Activated CD8-positive, alpha-beta memory T cell treated with anti-CD3 and anti-CD28 coated beads, Interleukin-2, amount 10 ng/mL, durations not matched to agents 7 days and 5 days (primary cell): ENCODE measurements at regions of chr12 and their contacts with region 1.

Region 1: GRCh38 chr12:89461649-89462612 is 62.7 kb downstream of the GALNT4 start:
- DNase-seq: no peak
- ATAC-seq: peak; percentile 87
- H3K4me3 Mint-ChIP-seq: peak overlapping the region; percentile 62
- H3K27ac Mint-ChIP-seq: peak overlapping the region; percentile 84
- H3K4me1 Mint-ChIP-seq: peaks cover 63% of the 10 kb centered on the region
- H3K27me3 Mint-ChIP-seq: no peaks in the 10 kb centered on the region

Region 2: GRCh38 chr12:89040146-89040964 is 421.6 kb before region 1 on chr12:
- CTCF ChIA-PET with region 1: interaction called, 14 read pairs
- DNase-seq: peak; percentile 95
- ATAC-seq: peak; percentile 95
- H3K4me3 Mint-ChIP-seq: peak overlapping the region; percentile 7
- H3K27ac Mint-ChIP-seq: peak overlapping the region; percentile 92
- H3K4me1 Mint-ChIP-seq: peaks cover 68% of the 10 kb centered on the region
- H3K27me3 Mint-ChIP-seq: no peaks in the 10 kb centered on the region

Region 3: GRCh38 chr12:89051065-89051677 is 410.8 kb before region 1 on chr12:
- CTCF ChIA-PET with region 1: interaction called, 19 read pairs
- DNase-seq: no peak
- ATAC-seq: peak; percentile 77
- H3K4me3 Mint-ChIP-seq: no peak overlapping the region
- H3K27ac Mint-ChIP-seq: peak overlapping the region; percentile 48
- H3K4me1 Mint-ChIP-seq: peaks cover 32% of the 10 kb centered on the region
- H3K27me3 Mint-ChIP-seq: no peaks in the 10 kb centered on the region

Region 4: GRCh38 chr12:89335452-89336244 is 126.3 kb before region 1 on chr12:
- CTCF ChIA-PET with region 1: no interaction called
- DNase-seq: no peak
- ATAC-seq: no peak
- H3K4me3 Mint-ChIP-seq: no peak overlapping the region
- H3K27ac Mint-ChIP-seq: no peak overlapping the region
- H3K4me1 Mint-ChIP-seq: peaks cover 26% of the 10 kb centered on the region
- H3K27me3 Mint-ChIP-seq: no peaks in the 10 kb centered on the region

Region 5: GRCh38 chr12:89352492-89353187 is 109.3 kb before region 1 on chr12 and contains the start of gene DUSP6:
- CTCF ChIA-PET with region 1: interaction called, 53 read pairs
- DNase-seq: peak; percentile 98
- ATAC-seq: peak; percentile 82
- H3K4me3 Mint-ChIP-seq: peak within 1 kb of the TSS; percentile 93
- H3K27ac Mint-ChIP-seq: peak within 1 kb of the TSS; percentile 93
- H3K4me1 Mint-ChIP-seq: peaks cover 38% of the 10 kb centered on the region
- H3K27me3 Mint-ChIP-seq: no peaks in the 10 kb centered on the region
- total RNA-seq, gene DUSP6: 76.3 to 100 TPM

Region 6: DNA sequence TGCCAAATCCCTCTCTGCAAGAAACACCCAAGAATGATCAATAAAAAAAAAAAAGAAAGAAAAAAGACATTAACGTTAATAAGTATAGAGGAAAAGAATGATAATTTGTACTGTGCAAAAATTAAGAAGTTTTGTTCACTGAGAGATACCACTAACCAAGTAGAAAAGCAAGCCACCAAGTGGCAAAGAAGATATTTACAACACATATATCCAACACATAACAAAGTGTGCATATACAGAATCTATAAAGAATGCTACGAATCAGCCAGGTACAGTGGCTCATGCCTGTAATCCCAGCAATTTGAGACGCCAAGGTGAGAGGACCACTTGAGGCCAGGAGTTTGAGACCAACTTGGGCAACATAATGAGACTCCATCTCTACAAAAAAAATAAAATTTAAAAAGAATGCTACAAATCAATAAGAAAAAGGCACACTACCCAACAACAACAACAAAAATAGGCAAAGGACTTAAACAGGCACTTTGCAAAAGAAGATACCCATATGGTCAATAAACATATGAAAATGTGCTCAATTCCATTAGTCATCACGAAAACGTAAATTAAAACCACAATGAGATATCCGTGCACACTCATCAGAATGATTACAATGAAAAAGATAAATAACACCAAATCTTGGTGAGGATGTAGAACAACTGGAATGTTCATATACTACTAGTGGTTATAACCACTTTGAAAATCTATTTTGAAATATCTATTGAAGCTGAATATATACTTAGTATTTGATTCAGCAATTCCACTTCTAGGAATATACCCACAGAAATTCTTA is 42.8 kb after region 1 on chr12:
- CTCF ChIA-PET with region 1: no interaction called
- DNase-seq: no peak
- ATAC-seq: no peak
- H3K4me3 Mint-ChIP-seq: no peak overlapping the region
- H3K27ac Mint-ChIP-seq: no peak overlapping the region
- H3K4me1 Mint-ChIP-seq: peaks cover 10% of the 10 kb centered on the region
- H3K27me3 Mint-ChIP-seq: no peaks in the 10 kb centered on the region

Region 7: DNA sequence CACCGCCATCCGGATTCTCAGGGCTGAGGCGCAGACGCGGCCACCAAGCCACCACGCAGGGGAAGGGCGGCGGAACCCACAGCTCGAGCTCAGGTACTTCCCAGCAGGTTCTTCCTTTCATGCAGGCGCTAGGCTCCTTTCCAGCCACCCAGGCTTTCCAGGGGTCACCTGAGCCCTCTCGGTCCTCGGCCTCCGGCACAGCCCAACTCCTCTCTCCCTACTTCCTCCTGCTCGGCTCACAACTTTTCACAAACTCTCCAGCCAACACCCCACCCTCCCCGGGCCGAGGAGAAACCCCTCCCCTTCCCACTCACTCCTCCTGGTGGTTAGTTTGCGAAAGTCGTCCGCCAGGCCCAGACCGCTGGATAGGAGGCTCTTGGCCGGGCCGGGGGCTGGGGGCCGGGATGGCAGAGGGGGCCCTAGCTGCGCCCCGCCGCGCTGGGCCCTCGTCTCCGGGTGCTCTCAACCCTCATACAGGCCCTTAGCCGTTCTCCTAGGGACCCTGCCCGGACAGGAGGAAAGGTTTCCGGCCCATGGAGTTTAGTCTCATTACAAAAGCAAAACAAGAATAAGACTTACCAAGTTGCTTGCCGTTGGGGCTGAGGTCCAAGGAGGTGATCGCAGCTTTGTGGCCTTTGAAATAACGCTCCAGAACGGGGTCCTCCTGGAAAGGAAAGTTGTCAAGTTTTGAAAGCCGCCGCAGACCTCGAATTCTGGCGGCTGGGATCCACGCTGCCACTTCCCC is 62.8 kb after region 1 on chr12 and contains the start of gene GALNT4:
- CTCF ChIA-PET with region 1: interaction called, 194 read pairs
- DNase-seq: peak; percentile 89
- ATAC-seq: peak; percentile 73
- H3K4me3 Mint-ChIP-seq: peak within 1 kb of the TSS; percentile 92
- H3K27ac Mint-ChIP-seq: peak within 1 kb of the TSS; percentile 97
- H3K4me1 Mint-ChIP-seq: peaks cover 74% of the 10 kb centered on the region
- H3K27me3 Mint-ChIP-seq: no peaks in the 10 kb centered on the region
- total RNA-seq, gene GALNT4: 16.5 to 17.5 TPM